ENCODE measurements at regions of chr6 and their contacts with region 1.

Region 1: DNA sequence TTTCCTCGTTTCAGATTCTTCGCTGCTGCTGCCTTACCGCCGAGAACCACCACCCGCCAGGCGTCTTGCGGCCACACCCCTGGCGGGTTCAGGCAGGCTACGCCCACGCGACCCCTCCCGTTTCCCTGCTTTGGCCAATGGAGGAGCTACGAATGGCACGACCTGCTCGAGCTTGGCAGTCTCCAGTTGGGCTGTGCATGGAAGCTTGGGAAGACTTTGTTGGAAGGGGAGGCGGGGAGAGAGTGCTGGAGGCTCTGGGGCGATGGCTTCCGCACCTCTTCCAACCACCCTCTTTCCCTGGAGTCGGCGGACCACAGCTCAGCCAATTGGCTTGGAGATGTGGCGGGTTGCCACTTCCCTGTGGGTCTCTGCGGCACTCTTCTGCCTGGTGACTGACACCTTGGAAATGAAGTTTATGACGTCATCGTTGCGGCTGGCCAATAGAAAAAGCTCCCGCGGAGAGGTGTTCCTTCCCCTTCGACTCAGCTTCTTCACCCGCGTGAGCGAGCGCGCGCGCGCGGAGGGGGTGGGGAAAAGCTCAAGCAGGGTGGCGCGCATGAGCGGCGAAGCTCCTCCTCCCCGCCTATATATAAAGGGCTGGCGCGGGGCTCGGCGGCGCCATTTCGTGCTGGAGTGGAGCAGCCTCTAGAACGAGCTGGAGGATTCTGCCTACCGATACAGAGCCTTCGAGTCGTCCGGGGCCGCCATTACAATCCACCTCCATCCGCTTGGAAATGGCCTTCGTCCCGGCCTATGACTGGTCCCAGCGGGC is 3.4 kb downstream of the BRD2 start:
- DNase-seq: peak; percentile 100
- ATAC-seq: peak; percentile 50
- H3K4me3 Mint-ChIP-seq: peak overlapping the region; percentile 96
- H3K27ac Mint-ChIP-seq: peak overlapping the region; percentile 98
- H3K4me1 Mint-ChIP-seq: peaks cover 24% of the 10 kb centered on the region
- H3K27me3 Mint-ChIP-seq: no peaks in the 10 kb centered on the region

Region 2: DNA sequence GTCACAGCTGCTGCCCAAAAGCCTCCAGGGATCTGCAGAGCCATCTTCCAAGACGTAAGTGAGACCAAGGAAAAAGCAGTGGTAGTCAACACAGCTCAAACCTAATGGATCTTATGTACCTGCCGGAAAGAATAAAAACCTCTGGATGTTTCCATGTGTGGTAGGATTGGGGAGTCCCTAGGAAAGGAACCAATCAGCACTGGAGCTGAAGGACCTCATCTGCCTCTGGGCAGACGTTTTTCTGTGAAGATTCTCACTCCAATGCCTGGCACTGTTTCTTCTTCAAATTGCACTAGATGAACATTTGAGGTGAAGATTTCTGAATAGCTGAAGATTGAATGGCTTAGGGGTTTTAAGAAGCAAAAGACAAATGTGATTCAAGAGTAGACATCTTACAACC is 208.3 kb before region 1 on chr6 and contains the start of gene HLA-DQB2:
- CTCF ChIA-PET with region 1: no interaction called
- POLR2A ChIA-PET with region 1: no interaction called
- DNase-seq: no peak
- ATAC-seq: no peak
- H3K4me3 Mint-ChIP-seq: no peak within 1 kb of the TSS
- H3K27ac Mint-ChIP-seq: no peak within 1 kb of the TSS
- H3K4me1 Mint-ChIP-seq: no peaks in the 10 kb centered on the region
- H3K27me3 Mint-ChIP-seq: peaks cover 56% of the 10 kb centered on the region
- total RNA-seq, gene HLA-DQB2: 0.32 TPM in 1 of 2 experiments, not detected in the other

Region 3: DNA sequence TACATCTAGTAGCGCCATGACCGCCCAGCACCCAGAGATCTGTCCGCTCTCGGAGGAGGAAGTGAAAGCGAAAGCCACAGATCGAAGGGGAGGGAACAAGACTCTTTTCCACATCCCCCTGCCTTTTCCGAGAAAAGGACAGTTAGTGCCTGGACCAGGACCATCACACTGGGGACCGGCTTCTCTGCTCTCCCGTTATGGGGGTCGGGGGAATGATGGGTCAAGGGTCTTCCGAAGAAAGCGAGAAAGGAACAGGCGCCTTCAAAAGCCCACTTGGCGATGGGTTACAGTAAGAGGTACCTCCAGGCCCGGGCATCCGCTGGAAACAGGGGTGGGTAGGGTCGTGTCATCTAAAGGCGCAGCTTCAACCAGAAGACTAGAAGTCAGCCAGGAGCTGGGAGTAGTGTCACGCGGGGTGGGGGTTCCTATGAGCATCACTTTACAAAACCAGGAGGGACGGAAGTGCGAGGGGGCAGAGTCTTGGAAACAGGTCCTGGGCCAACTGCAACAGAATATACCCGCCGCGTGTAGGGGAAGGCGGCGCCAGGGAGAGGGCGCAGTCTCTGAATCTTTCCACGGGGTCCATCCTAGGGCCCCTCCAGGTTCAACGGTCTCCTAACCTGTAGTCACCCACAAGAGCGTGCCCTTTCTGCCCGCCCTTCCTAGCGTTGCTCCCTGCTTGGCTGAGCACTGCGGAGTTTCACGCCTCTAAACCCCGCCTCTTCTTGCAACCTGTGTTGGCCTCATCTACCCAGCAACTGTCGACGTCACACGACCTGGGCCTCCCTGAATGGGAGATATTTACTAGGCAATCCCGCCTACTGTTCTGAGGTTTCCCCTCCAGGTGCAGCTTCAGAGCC is 127.6 kb before region 1 on chr6 and contains the start of gene PSMB8:
- CTCF ChIA-PET with region 1: interaction called, 36 read pairs
- POLR2A ChIA-PET with region 1: interaction called, 381 read pairs
- DNase-seq: peak; percentile 99
- ATAC-seq: peak; percentile 70
- H3K4me3 Mint-ChIP-seq: peak within 1 kb of the TSS; percentile 98
- H3K27ac Mint-ChIP-seq: peak within 1 kb of the TSS; percentile 99
- H3K4me1 Mint-ChIP-seq: peaks cover 71% of the 10 kb centered on the region
- H3K27me3 Mint-ChIP-seq: no peaks in the 10 kb centered on the region
- total RNA-seq, gene PSMB8: 385 to 397 TPM

Region 4: DNA sequence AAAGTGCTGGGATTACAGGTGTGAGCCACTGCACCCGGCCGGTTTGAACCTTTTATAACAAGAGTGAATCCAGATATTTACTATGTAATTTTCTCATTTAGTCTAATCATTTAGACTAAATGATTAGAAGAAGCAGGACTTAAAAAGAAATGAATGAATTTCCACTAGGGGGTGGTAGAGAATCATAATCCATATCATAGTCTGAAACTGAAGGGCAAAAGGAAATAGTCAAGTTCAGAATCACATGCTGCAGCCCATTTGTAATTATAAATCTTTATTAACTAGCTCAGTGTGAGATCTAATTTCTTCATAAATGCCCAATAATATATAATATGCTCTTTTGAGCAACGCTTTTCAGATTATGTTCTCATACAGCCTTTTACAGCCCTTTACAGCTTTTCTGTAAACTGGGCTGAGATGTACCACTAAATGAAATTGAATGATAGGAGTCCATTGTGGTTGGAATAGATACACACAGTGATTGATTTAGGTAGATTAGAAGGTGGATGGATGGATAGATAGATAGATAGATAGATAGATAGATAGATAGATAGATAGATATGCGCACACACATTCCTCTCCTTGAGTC is 86.0 kb before region 1 on chr6:
- CTCF ChIA-PET with region 1: interaction called, 32 read pairs
- POLR2A ChIA-PET with region 1: interaction called, 20 read pairs
- DNase-seq: no peak
- ATAC-seq: peak; percentile 61
- H3K4me3 Mint-ChIP-seq: no peak overlapping the region
- H3K27ac Mint-ChIP-seq: no peak overlapping the region
- H3K4me1 Mint-ChIP-seq: peaks cover 2% of the 10 kb centered on the region
- H3K27me3 Mint-ChIP-seq: peaks cover 16% of the 10 kb centered on the region

Region 5: DNA sequence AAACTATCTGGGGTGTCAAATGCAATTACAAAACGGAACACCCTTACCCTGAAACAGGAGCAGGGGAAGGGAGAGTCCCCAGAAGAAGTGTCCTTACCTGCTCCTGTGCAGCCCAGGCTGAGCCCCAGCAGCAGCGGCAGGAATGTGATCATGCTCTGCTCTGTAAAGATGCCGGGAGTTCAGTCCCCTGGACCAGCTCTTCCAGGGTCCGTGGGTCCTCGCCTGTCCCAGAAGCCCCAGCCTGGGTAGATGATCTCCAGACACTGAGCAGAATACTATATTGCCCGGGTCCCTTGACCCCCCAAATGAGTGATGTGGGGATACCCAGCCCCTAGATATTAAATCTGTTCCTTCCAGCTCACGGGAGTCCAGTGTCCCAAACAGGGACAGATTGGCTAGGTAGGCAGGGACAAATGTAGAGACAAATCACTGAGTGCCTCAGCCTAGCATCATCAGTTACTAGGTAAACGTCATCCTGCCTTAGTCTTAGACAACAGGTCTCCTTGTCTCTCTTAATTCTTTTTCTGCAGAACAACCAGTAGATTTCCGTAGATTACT is 31.0 kb before region 1 on chr6 and contains the start of gene HLA-DMB:
- CTCF ChIA-PET with region 1: interaction called, 106 read pairs
- POLR2A ChIA-PET with region 1: interaction called, 220 read pairs
- DNase-seq: peak; percentile 73
- ATAC-seq: peak; percentile 90
- H3K4me3 Mint-ChIP-seq: peak within 1 kb of the TSS; percentile 86
- H3K27ac Mint-ChIP-seq: peak within 1 kb of the TSS; percentile 97
- H3K4me1 Mint-ChIP-seq: peaks cover 69% of the 10 kb centered on the region
- H3K27me3 Mint-ChIP-seq: no peaks in the 10 kb centered on the region
- total RNA-seq, gene HLA-DMB: 14.4 to 14.7 TPM

Region 6: DNA sequence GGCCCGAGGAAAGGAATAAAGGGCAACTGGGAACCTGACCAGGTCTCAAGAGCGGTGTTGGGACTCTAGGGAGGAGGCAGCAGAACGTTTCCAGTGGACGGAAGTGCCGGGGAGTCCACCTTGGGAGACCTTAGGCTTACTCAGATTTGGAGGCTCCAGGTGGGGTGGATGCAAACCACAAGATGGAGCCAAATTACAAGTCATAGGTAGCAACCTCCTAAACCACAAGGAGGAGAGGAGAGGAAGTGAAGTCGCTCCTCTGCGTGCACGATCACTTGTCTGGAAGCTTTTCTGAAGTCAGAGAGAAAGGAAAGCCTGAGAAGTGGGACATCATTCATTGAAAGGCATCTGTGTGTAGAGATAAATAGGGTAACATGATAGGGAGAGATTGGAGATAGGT is 28.3 kb after region 1 on chr6:
- CTCF ChIA-PET with region 1: interaction called, 3 read pairs
- POLR2A ChIA-PET with region 1: interaction called, 11 read pairs
- DNase-seq: peak; percentile 59
- ATAC-seq: peak; percentile 67
- H3K4me3 Mint-ChIP-seq: no peak overlapping the region
- H3K27ac Mint-ChIP-seq: no peak overlapping the region
- H3K4me1 Mint-ChIP-seq: peaks cover 11% of the 10 kb centered on the region
- H3K27me3 Mint-ChIP-seq: peaks cover 36% of the 10 kb centered on the region

Region 7: GRCh38 chr6:33040157-33040556 is 68.4 kb after region 1 on chr6:
- CTCF ChIA-PET with region 1: no interaction called
- POLR2A ChIA-PET with region 1: no interaction called
- DNase-seq: no peak
- ATAC-seq: no peak
- H3K4me3 Mint-ChIP-seq: no peak overlapping the region
- H3K27ac Mint-ChIP-seq: no peak overlapping the region
- H3K4me1 Mint-ChIP-seq: no peaks in the 10 kb centered on the region
- H3K27me3 Mint-ChIP-seq: peaks cover 49% of the 10 kb centered on the region

Region 8: GRCh38 chr6:33208091-33208967 is 236.6 kb after region 1 on chr6 and contains the start of gene RING1:
- CTCF ChIA-PET with region 1: no interaction called
- POLR2A ChIA-PET with region 1: interaction called, 10 read pairs
- DNase-seq: peak; percentile 90
- ATAC-seq: peak; percentile 60
- H3K4me3 Mint-ChIP-seq: peak within 1 kb of the TSS; percentile 80
- H3K27ac Mint-ChIP-seq: peak within 1 kb of the TSS; percentile 87
- H3K4me1 Mint-ChIP-seq: peaks cover 64% of the 10 kb centered on the region
- H3K27me3 Mint-ChIP-seq: peaks cover 4% of the 10 kb centered on the region
- total RNA-seq, gene RING1: 39.8 to 44.6 TPM